ENCODE measurements at regions of chr13 and their contacts with region 1.

Region 1: DNA sequence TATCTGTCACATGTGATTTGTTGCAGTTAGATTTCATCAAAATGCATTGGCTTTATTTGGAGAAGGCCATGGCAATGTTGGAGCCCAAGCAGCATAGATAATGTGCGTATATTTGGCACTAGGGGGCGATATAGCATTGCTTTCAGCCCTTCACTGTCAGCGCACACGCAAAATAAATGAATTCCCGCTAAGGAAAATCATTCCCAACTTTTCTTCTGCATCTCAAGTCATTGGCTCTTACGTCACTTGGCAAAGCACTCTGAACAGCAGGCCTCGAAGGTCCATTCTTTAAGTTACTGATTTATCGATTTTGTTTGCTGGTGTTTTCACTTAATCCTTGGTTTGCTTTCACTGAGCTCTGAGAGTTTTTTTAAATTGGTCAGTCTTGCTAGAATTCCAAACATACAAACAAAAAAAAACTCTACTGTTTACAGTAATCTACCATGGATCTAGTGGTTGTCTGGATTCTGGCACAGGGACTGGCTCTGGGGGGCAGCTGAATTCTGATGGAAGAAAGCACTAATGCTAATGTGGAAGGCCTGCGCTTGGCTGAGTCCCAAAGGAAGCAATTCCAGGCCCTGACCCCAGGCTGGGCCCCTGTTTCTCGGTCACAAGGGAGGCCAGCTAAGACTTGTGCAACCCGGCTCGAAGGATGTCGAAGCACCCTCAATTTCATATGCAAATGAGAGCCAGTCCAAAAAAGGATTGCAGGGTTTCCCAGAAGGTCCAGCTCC is 97.7 kb upstream of the IPO5 start:
- DNase-seq: peak; percentile 47 to 65
- ATAC-seq: peak; percentile 89 to 94
- H3K4me3 ChIP-seq: no peak overlapping the region
- H3K27ac ChIP-seq: peak overlapping the region in 1 of 2 experiments; percentile 0; a peak in 1 of 6 replicates
- H3K4me1 ChIP-seq: peaks cover 14% of the 10 kb centered on the region; the same call in 1 of the 3 replicates
- CTCF ChIP-seq: peak; percentile 81
- EP300 ChIP-seq: no peak
- POLR2A ChIP-seq: no peak
- RAD21 ChIP-seq: peak; percentile 90 to 91

Region 2: GRCh38 chr13:97834250-97834649 is 21.5 kb before region 1 on chr13:
- CTCF ChIA-PET with region 1: no interaction called
- POLR2A ChIA-PET with region 1: no interaction called
- DNase-seq: no peak
- ATAC-seq: no peak
- H3K4me3 ChIP-seq: no peak overlapping the region
- H3K27ac ChIP-seq: no peak overlapping the region
- H3K4me1 ChIP-seq: no peaks in the 10 kb centered on the region
- CTCF ChIP-seq: no peak
- EP300 ChIP-seq: no peak
- POLR2A ChIP-seq: no peak
- RAD21 ChIP-seq: 0 out of 5 replicates have a peak, but pooled peaks of 1 of the 2 experiments have one; percentile 4

Region 3: GRCh38 chr13:97879646-97880310 is 24.0 kb after region 1 on chr13:
- CTCF ChIA-PET with region 1: interaction called, 10 read pairs
- POLR2A ChIA-PET with region 1: no interaction called
- DNase-seq: peak; percentile 15 to 31
- ATAC-seq: peak; percentile 73 to 91; a peak in 5 of 6 replicates
- H3K4me3 ChIP-seq: no peak overlapping the region
- H3K27ac ChIP-seq: peak overlapping the region; percentile 61 to 87; a peak in 5 of 6 replicates
- H3K4me1 ChIP-seq: peaks cover 23% of the 10 kb centered on the region
- CTCF ChIP-seq: no peak
- EP300 ChIP-seq: no peak
- POLR2A ChIP-seq: no peak
- RAD21 ChIP-seq: no peak

Region 4: DNA sequence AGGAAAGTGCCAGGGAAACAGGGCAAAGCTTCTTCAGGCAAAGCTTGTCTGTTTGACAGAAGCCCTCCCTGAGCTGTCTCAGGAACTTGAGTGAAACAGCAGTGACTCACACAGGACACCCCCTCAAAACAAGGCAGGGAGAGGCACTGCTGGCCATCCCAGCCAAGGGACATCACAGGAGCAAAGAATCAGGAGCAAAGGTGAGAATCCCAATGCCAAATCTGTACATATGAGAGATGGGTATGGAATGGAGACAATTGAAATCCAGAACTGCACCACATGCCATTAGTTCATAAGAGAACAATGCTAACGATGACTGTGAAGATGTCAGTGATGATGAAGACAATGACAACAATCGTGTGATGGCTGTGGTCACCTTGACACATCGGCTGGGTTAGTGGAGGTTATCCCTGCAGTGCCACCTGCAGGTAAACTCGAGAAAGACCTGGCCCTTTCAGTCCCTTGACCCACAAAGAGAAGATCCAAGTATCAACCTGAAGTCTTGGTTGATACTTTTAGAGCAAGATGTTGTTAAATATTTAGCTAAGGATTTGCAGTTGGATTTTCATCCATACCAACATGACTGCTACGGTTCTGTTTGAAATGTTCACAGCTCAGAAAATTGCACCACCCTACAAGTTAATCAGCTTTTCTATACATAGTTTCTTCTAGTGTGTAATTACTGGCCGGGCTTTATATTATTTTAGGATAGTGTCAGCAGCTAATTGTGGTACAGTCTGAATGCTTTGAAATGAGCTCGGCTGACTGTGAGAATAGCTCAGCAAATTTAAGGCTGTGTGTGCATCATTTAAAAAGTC is 55.8 kb after region 1 on chr13:
- CTCF ChIA-PET with region 1: interaction called, 21 read pairs
- POLR2A ChIA-PET with region 1: no interaction called
- DNase-seq: peak; percentile 17 to 36
- ATAC-seq: peak; percentile 50 to 75; a peak in 3 of 6 replicates
- H3K4me3 ChIP-seq: no peak overlapping the region
- H3K27ac ChIP-seq: no peak overlapping the region
- H3K4me1 ChIP-seq: no peaks in the 10 kb centered on the region
- CTCF ChIP-seq: peak; percentile 35
- EP300 ChIP-seq: no peak
- POLR2A ChIP-seq: no peak
- RAD21 ChIP-seq: peak; percentile 22 to 46; a peak in 2 of 5 replicates